HepG2 (cell line): ENCODE measurements at regions of chr14 and their contacts with region 1.

Region 1: DNA sequence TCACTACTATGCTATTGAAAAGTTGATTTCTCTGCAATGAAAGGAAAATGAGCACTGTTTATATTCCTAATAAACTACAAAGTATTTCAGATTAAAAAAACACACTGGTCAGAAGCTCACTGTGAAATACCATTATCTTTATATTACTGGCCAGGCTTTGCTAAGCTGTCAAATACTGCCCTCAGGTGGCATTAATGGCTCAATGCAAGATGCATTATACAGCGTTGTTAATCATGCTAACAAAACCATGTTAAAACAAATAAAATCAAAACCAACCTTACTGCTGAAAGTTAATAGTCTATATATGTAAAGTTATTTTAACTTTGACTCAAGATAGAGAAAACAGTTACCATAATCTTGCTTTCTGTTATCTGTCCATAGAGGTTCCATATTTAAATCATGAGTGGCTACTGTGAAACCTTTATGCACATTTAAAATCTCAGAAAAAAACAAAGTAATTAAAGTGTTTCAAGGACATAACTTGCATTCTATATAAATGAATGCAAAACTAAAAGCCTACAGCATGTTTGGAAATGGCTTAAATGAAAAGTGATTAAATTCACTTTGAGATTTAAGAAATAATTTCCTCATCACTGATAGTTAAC is 121.7 kb downstream of the RALGAPA1 start:
- DNase-seq: peak; percentile 75
- ATAC-seq: peak; percentile 91
- H3K4me3 ChIP-seq: no peak overlapping the region
- H3K27ac ChIP-seq: no peak overlapping the region
- H3K4me1 ChIP-seq: no peaks in the 10 kb centered on the region
- H3K27me3 ChIP-seq: no peaks in the 10 kb centered on the region
- CTCF ChIP-seq: peak; percentile 94
- EP300 ChIP-seq: no peak
- POLR2A ChIP-seq: no peak
- RAD21 ChIP-seq: peak; percentile 89

Region 2: DNA sequence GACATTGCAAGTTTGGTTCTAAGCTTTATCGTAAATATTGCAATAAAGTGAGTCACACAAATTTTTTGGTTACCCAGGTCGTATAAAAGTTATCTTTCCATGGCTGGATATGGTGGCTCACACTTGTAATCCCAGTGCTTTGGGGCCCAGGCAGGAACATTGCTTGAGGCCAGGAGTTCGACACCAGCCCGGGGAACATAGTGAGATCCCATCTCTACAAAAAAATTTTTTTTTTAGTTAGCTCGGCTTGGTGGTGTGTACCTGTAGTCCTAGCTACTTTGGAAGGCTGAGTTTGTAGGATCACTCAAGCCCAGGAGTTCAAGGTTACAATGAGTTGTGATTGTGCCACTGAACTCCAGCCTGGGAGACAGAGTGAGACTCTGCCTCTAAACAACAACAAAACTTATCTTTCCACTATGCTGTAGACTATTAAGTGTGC is 540.7 kb before region 1 on chr14:
- CTCF ChIA-PET with region 1: no interaction called
- POLR2A ChIA-PET with region 1: no interaction called
- in situ Hi-C with region 1: no loop called
- intact Hi-C with region 1: loop called (anchors 2 kb)
- DNase-seq: peak; percentile 72
- ATAC-seq: peak; percentile 84
- H3K4me3 ChIP-seq: no peak overlapping the region
- H3K27ac ChIP-seq: peak overlapping the region; percentile 3
- H3K4me1 ChIP-seq: peaks cover 33% of the 10 kb centered on the region
- H3K27me3 ChIP-seq: no peaks in the 10 kb centered on the region
- CTCF ChIP-seq: no peak
- EP300 ChIP-seq: no peak
- POLR2A ChIP-seq: no peak
- RAD21 ChIP-seq: no peak

Region 3: GRCh38 chr14:35430459-35431198 is 256.8 kb before region 1 on chr14:
- CTCF ChIA-PET with region 1: no interaction called
- POLR2A ChIA-PET with region 1: no interaction called
- in situ Hi-C with region 1: loop called (anchors 5 kb)
- intact Hi-C with region 1: no loop called
- DNase-seq: no peak
- ATAC-seq: peak; percentile 66
- H3K4me3 ChIP-seq: peak overlapping the region; percentile 18 to 53 (median 37)
- H3K27ac ChIP-seq: no peak overlapping the region
- H3K4me1 ChIP-seq: peaks cover 14% of the 10 kb centered on the region
- H3K27me3 ChIP-seq: no peaks in the 10 kb centered on the region; a peak in 1 of 5 replicates
- CTCF ChIP-seq: no peak
- EP300 ChIP-seq: no peak
- POLR2A ChIP-seq: no peak
- RAD21 ChIP-seq: no peak

Region 4: DNA sequence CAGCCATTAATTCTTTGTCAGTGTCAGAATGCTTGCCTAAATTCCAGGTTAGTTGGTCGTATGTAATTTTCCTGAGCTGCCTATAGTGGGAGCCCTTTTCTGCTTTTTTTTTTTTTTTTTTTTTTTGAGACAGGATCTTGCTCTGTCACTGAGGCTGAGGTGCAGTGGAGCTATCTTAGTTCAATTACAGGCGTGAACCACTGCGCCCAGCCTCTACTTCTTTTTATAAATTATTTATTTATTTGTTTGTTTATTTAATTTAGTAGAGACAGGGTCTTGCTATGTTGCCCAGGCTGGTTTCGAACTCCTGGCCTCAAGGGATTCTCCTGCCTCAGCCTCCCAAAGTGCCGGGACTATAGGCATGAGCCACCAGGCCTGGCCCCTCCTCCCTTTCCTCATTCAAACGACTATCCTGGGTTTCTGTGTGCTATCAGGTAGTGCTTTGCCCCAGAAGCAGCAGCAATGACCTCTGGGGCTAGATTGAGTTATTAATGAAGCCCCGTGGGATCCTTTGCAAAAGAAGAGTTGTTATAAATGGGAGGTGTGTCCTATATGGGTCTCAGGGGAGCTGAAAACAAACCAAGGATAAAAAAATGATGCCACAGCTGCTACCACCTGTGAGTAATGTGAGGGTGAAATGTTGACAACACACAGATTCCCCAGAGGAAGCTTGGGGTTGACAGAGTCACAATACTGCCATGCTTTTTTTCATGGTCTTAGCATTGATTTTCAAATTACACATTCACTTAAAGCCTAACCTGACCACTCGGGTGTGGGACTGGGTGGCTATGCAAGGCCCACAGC is 248.3 kb before region 1 on chr14:
- CTCF ChIA-PET with region 1: interaction called, 14 read pairs
- POLR2A ChIA-PET with region 1: no interaction called
- in situ Hi-C with region 1: loop called (anchors 5 kb)
- intact Hi-C with region 1: loop called (anchors 1 kb)
- DNase-seq: peak; percentile 52
- ATAC-seq: peak; percentile 75
- H3K4me3 ChIP-seq: no peak overlapping the region
- H3K27ac ChIP-seq: no peak overlapping the region
- H3K4me1 ChIP-seq: no peaks in the 10 kb centered on the region
- H3K27me3 ChIP-seq: no peaks in the 10 kb centered on the region
- CTCF ChIP-seq: peak; percentile 70
- EP300 ChIP-seq: no peak
- POLR2A ChIP-seq: no peak
- RAD21 ChIP-seq: no peak; the same call in 1 of the 2 replicates

Region 5: GRCh38 chr14:35533357-35534207 is 153.9 kb before region 1 on chr14 and contains the start of gene INSM2:
- CTCF ChIA-PET with region 1: no interaction called
- POLR2A ChIA-PET with region 1: no interaction called
- in situ Hi-C with region 1: no loop called
- intact Hi-C with region 1: loop called (anchors 5 kb)
- DNase-seq: peak; percentile 70
- ATAC-seq: peak; percentile 84
- H3K4me3 ChIP-seq: peak within 1 kb of the TSS; percentile 62 to 80 (median 63)
- H3K27ac ChIP-seq: no peak within 1 kb of the TSS
- H3K4me1 ChIP-seq: peaks cover 20% of the 10 kb centered on the region
- H3K27me3 ChIP-seq: peaks cover 11 to 55% of the 10 kb centered on the region in 2 experiments
- CTCF ChIP-seq: peak; percentile 58
- EP300 ChIP-seq: no peak
- POLR2A ChIP-seq: no peak
- RAD21 ChIP-seq: peak; percentile 38
- total RNA-seq, gene INSM2: not detected in 2 replicates